Activated T-helper 1 cell treated with anti-CD3 and anti-CD28 coated beads, Interleukin-12 subunit alpha, Interleukin-12 subunit beta, Interleukin-2, Interleukin-4 antibody, amounts not matched to agents 30 ng/mL and 10 ng/mL and 1 ng/mL, durations not matched to agents 14 hours and 24 hours and 36 hours (primary cell): ENCODE measurements at regions of chr5 and their contacts with region 1.

Region 1: DNA sequence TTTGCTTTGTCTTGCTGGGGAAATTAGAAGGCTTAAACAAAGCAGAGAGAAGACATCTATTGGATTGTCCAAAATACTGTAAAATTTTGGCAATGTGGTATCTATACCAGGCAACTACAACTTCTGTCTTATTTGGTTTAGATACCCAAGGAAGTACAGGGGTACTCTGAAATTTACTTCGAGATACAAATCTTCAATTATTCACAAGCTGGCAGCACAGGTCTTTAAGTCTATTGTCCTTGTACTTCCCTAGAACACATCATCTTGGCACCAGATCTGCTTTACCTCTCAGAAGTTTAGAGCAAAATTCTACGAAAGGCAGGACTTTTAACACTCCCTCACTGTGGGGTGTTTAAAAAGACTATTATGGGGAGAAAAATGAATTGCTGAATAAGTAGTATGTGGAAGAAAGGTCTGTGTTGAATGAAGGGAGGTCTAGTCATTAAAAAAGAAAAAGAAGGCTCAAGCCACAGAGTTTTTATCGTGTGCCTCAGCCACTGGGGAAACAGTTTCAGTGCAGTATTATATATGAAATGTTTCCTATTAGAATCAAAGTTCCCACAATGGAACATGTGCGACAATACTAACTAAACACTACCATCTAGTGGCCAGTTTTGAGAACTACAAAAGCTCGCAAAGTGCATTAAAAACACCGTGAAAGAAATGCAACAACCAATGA is 93.7 kb downstream of the PDE4D start:
- DNase-seq: peak; percentile 15
- H3K4me3 Mint-ChIP-seq: no peak overlapping the region
- H3K27ac Mint-ChIP-seq: no peak overlapping the region
- H3K4me1 Mint-ChIP-seq: no peaks in the 10 kb centered on the region
- H3K27me3 Mint-ChIP-seq: peaks cover 11% of the 10 kb centered on the region

Region 2: DNA sequence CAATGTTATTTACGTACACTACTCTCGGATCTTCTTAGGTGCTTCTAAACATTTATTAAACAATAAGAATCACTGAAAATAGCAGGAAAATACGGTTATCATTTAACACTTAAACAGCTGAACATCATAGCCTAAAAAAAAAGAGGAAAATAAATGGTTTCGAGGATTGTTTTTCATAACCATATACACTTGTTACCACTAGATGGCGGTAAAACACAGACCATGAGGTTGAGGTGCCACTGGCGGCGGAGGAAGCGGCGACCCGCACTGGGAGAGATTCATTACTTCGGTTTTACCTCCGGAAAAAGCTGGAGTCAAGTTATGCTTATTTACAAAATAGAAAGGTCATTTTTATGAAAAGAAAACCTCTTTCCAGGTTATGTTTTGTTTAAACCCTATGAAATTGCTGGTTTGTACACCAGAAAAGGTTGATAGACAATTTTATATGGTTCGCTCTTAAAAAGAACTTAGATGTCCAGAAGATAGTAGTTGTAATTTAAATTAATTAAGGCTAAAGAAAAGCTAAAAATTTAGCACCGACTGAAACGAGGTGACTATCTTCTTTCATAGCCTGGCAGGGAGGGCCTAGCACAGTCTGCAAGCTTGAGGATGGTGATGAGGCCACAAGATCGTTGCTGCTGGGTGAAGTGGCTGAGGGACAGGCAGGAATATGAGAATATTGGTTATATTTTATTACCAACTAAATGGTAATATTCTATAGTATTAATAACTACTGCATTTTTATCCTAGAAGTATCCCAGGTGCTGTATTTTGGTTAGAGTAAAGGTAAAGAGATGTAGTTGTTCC is 611.2 kb before region 1 on chr5:
- intact Hi-C with region 1: loop called (anchors 1 kb)
- DNase-seq: peak; percentile 32
- H3K4me3 Mint-ChIP-seq: no peak overlapping the region
- H3K27ac Mint-ChIP-seq: no peak overlapping the region
- H3K4me1 Mint-ChIP-seq: peaks cover 7% of the 10 kb centered on the region
- H3K27me3 Mint-ChIP-seq: peaks cover 27% of the 10 kb centered on the region

Region 3: GRCh38 chr5:59506285-59506877 is 293.4 kb before region 1 on chr5:
- intact Hi-C with region 1: loop called (anchors 1 kb)
- DNase-seq: no peak
- H3K4me3 Mint-ChIP-seq: no peak overlapping the region
- H3K27ac Mint-ChIP-seq: no peak overlapping the region
- H3K4me1 Mint-ChIP-seq: peaks cover 9% of the 10 kb centered on the region
- H3K27me3 Mint-ChIP-seq: peaks cover 12% of the 10 kb centered on the region

Region 4: DNA sequence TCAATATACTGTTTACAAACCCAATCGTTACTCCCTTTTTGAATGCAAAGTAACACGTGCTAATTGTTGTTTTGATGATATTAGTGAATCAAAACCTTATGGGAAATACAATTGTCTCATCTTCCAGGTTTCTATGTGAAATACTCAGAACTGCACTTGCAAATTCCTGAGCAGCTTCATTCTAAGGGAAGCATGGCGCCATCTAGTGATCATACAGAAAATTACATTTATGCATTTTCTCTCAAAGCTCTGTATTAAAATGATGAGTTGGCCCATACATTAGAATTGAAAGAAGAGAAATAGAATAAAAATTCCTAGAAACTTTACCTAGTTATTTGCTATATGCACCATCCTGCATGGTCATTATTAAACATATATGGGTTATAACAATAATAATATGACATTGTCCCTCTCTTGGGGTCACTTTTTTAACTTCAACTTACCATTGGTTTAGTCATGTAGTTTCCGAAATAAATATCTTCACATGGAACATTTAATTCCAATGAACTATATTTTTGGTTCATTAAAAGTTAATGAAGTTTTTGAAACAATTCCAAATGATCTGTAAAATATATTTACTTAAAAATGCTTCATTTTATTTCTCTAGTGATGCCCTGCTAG is 126.3 kb before region 1 on chr5:
- intact Hi-C with region 1: loop called (anchors 1 kb)
- DNase-seq: no peak
- H3K4me3 Mint-ChIP-seq: no peak overlapping the region
- H3K27ac Mint-ChIP-seq: no peak overlapping the region
- H3K4me1 Mint-ChIP-seq: peaks cover 4% of the 10 kb centered on the region
- H3K27me3 Mint-ChIP-seq: peaks cover 6% of the 10 kb centered on the region

Region 5: DNA sequence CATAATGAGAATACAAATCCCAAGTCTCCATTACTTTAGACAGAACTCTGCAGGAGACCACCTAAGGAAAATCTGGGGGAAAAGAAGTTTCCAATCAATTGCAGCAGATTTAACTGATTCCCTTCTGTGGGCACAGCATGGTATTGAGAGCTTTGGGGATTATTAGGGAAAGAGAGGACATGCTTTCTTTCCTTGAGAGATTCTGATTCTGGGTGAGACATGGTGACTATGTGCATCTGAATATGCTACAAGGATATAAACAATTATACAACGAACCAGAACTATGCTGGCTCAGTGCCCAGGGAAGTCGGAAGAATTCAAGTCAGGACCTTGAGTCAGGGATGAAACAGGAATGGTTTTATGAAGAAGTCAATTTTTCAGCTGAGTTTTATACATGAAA is 90.0 kb before region 1 on chr5:
- intact Hi-C with region 1: no loop called
- DNase-seq: no peak
- H3K4me3 Mint-ChIP-seq: no peak overlapping the region
- H3K27ac Mint-ChIP-seq: no peak overlapping the region
- H3K4me1 Mint-ChIP-seq: no peaks in the 10 kb centered on the region
- H3K27me3 Mint-ChIP-seq: peaks cover 3% of the 10 kb centered on the region